ENCODE measurements at regions of chr4 and their contacts with region 1.

Region 1: DNA sequence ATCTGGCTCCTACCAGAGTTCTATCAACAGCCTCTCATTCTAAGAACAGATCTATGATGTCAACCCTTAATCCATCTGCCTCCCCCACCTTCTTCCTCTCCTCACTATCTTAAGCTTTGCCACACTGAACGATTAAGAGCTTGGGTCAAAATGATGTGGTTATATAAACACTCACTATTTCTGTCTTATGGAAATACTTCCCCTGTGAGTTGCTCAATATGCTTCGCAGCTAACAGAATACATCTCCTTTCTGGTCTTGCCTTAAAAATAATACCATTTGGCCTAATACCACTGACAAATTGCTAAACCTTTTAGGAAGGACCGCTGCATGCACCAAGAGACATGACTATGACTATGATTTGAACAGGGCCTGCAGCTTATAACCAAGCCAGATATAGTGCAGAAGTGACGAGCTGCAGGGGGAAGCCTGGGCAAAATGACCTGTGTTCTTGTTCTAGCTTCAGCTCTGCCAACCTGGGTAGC is 130.9 kb downstream of the RNF150 start:
- DNase-seq: no peak

Region 2: GRCh38 chr4:141046255-141046654 is 43.9 kb after region 1 on chr4:
- intact Hi-C with region 1: loop called (anchors 5 kb)
- DNase-seq: no peak

Measured in cardiac septum (tissue), 1 donor.